ENCODE measurements at regions of chr6 and their contacts with region 1.

Region 1: GRCh38 chr6:144582939-144583613 is 297.9 kb downstream of the UTRN start:
- DNase-seq: peak; percentile 91
- H3K4me3 Mint-ChIP-seq: peak overlapping the region; percentile 88
- H3K27ac Mint-ChIP-seq: peak overlapping the region; percentile 92
- H3K4me1 Mint-ChIP-seq: peaks cover 49% of the 10 kb centered on the region
- H3K27me3 Mint-ChIP-seq: no peaks in the 10 kb centered on the region

Region 2: GRCh38 chr6:144349690-144350527 is 233.2 kb before region 1 on chr6:
- intact Hi-C with region 1: loop called (anchors 5 kb)
- DNase-seq: peak; percentile 78
- H3K4me3 Mint-ChIP-seq: peak overlapping the region; percentile 80
- H3K27ac Mint-ChIP-seq: peak overlapping the region; percentile 92
- H3K4me1 Mint-ChIP-seq: peaks cover 74% of the 10 kb centered on the region
- H3K27me3 Mint-ChIP-seq: no peaks in the 10 kb centered on the region

Region 3: DNA sequence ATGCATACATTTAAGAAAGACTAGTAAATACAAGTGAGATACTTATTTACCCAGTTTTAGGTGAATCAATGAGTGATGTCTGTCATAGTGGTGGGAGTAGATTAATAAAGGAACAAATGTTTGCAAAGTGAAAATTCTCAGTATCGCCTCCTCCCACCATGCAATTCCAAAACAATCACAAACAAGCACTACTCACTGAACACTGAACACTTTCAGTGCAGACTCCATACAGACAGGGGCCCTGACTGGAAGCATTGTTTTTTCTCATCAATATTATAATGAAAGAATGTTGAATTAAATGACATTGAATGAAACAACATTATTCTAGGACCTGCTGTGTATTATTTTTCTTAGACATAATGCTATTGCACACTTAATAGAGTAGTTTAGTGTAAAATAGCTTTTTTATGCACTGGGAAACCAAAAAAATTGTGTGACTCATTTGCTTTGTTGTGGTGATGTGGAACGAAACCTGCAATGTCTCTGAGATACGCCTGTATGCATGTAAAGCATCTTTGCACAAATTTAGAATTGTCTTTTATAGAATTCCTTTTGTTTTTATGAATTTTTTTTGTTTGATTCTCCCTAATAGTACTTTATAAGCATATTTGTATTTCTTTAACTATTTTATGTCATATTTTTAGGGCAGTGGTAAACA is 19.6 kb after region 1 on chr6:
- intact Hi-C with region 1: loop called (anchors 1 kb)
- DNase-seq: peak; percentile 79
- H3K4me3 Mint-ChIP-seq: peak overlapping the region; percentile 48
- H3K27ac Mint-ChIP-seq: peak overlapping the region; percentile 82
- H3K4me1 Mint-ChIP-seq: peaks cover 45% of the 10 kb centered on the region
- H3K27me3 Mint-ChIP-seq: no peaks in the 10 kb centered on the region

Region 4: GRCh38 chr6:144744720-144745119 is 161.6 kb after region 1 on chr6:
- intact Hi-C with region 1: no loop called
- DNase-seq: no peak
- H3K4me3 Mint-ChIP-seq: no peak overlapping the region
- H3K27ac Mint-ChIP-seq: no peak overlapping the region
- H3K4me1 Mint-ChIP-seq: peaks cover 8% of the 10 kb centered on the region
- H3K27me3 Mint-ChIP-seq: no peaks in the 10 kb centered on the region

Region 5: GRCh38 chr6:144782634-144783033 is 199.6 kb after region 1 on chr6:
- intact Hi-C with region 1: loop called (anchors 5 kb)
- DNase-seq: no peak
- H3K4me3 Mint-ChIP-seq: no peak overlapping the region
- H3K27ac Mint-ChIP-seq: no peak overlapping the region
- H3K4me1 Mint-ChIP-seq: peaks cover 4% of the 10 kb centered on the region
- H3K27me3 Mint-ChIP-seq: no peaks in the 10 kb centered on the region

Region 6: GRCh38 chr6:145028144-145028818 is 445.2 kb after region 1 on chr6:
- intact Hi-C with region 1: loop called (anchors 1 kb)
- DNase-seq: peak; percentile 71
- H3K4me3 Mint-ChIP-seq: no peak overlapping the region
- H3K27ac Mint-ChIP-seq: no peak overlapping the region
- H3K4me1 Mint-ChIP-seq: peaks cover 6% of the 10 kb centered on the region
- H3K27me3 Mint-ChIP-seq: peaks cover 36% of the 10 kb centered on the region

Region 7: GRCh38 chr6:145814501-145815308 is 1231.6 kb after region 1 on chr6 and contains the start of gene FBXO30:
- intact Hi-C with region 1: loop called (anchors 10 kb)
- DNase-seq: peak; percentile 97
- H3K4me3 Mint-ChIP-seq: peak within 1 kb of the TSS; percentile 90
- H3K27ac Mint-ChIP-seq: peak within 1 kb of the TSS; percentile 90
- H3K4me1 Mint-ChIP-seq: peaks cover 29% of the 10 kb centered on the region
- H3K27me3 Mint-ChIP-seq: no peaks in the 10 kb centered on the region
- total RNA-seq, gene FBXO30: 6.3 and 6.6 TPM in 2 replicates